CD8-positive, alpha-beta T cell (primary cell): ENCODE measurements at regions of chr2 and their contacts with region 1.

Region 1: DNA sequence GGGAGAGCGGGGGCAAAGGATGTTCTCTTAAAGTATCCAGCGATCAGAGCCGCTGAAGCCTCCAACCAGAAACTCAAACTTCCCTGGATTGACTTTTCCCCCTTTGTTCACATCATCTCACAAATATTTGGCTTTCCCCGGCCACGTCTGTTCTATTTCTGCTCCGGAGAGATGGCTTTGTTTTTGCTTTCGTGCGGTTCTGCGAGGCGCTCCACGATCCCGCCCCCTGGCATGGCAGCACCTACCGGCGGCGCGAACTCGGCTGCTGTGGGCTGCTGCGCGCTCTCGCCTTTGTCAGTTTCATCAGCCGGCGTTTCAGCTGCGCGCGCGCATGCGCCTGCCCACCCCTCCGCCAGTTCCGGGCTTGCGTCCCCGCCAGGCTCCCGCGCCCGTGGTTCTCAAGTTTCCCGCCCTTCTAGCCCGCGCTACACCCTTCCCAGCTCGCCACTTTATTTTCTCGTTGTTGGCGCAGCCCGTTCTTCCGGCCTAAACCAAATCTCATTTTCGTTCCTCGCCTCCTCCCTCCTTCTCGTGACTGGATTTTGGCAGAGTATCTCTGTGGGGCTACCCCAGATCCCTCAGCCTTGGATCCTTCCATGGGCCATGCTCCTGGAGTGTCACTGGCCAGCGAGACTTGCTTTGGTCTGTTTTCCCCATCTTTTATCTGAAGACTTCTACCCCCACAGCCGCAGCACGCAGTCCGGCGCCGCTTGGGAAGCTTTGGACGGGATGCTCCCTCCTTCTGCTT is 98.0 kb downstream of the INSIG2 start:
- DNase-seq: peak; percentile 66 to 94 (median 88)
- ATAC-seq: peak; percentile 92
- H3K4me3 ChIP-seq: peak overlapping the region; percentile 81 to 93
- H3K4me3 Mint-ChIP-seq: peak overlapping the region; percentile 94
- H3K27ac ChIP-seq: peak overlapping the region; percentile 73 to 79
- H3K27ac Mint-ChIP-seq: peak overlapping the region; percentile 94
- H3K4me1 ChIP-seq: peaks cover 9% of the 10 kb centered on the region
- H3K4me1 Mint-ChIP-seq: peaks cover 17% of the 10 kb centered on the region
- H3K27me3 ChIP-seq: no peaks in the 10 kb centered on the region
- H3K27me3 Mint-ChIP-seq: no peaks in the 10 kb centered on the region
- CTCF ChIP-seq: no peak

Region 2: DNA sequence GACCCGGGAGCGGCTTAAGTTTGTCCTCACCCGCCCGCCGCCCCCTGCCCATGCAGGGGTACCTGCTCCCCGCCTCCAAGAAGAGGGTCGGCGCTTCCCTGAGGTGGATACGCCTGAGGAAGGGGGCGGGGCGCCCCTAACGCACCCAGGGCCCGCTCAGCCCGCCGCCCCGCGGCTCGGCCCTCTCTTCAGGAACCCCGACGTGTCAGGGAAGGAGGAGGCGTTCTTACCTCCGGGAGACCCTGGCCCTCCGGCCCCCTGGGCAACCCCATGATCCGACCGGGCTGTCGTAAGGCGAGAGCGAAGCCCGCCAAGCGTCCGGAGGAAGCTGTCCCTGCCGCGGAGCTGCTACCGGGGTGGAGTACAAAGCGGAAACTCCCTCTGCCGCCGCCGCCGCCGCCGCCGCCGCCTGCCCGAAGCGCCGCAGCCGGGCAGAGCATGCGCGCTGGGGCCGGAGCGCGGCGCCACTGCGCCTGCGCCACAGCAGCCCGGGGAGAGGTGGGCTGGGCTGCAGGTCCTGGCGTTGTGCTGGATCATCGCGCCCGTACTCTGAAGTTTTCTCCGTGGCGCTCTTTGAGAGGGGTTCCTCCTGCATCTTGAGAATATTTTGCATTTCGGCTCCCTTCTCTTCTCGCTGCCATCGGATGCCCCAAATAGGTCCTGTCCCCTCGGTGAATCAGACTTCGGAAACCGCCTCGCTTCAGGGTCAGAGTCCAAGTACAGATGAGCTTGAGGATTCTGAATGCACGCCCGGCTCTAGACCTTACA is 172.4 kb before region 1 on chr2 and contains the start of gene CCDC93:
- CTCF ChIA-PET with region 1: no interaction called
- POLR2A ChIA-PET with region 1: interaction called, 5 read pairs
- intact Hi-C with region 1: loop called (anchors 1 to 5 kb)
- DNase-seq: peak; percentile 73 to 94 (median 86)
- ATAC-seq: peak; percentile 85
- H3K4me3 ChIP-seq: peak within 1 kb of the TSS; percentile 73 to 88
- H3K4me3 Mint-ChIP-seq: peak within 1 kb of the TSS; percentile 95
- H3K27ac ChIP-seq: peak within 1 kb of the TSS; percentile 93 to 95
- H3K27ac Mint-ChIP-seq: peak within 1 kb of the TSS; percentile 92
- H3K4me1 ChIP-seq: peaks cover 27% of the 10 kb centered on the region
- H3K4me1 Mint-ChIP-seq: peaks cover 47% of the 10 kb centered on the region
- H3K27me3 ChIP-seq: no peaks in the 10 kb centered on the region
- H3K27me3 Mint-ChIP-seq: peaks cover 3% of the 10 kb centered on the region
- CTCF ChIP-seq: no peak
- total RNA-seq, gene CCDC93: 84.4 to 85.3 TPM

Region 3: GRCh38 chr2:118088051-118089024 is 97.9 kb before region 1 on chr2 and contains the start of gene INSIG2:
- CTCF ChIA-PET with region 1: interaction called, 3 read pairs
- POLR2A ChIA-PET with region 1: interaction called, 14 read pairs
- intact Hi-C with region 1: loop called (anchors 1 to 5 kb)
- DNase-seq: peak; percentile 79 to 95 (median 86)
- ATAC-seq: peak; percentile 88
- H3K4me3 ChIP-seq: peak within 1 kb of the TSS; percentile 70 to 98
- H3K4me3 Mint-ChIP-seq: peak within 1 kb of the TSS; percentile 92
- H3K27ac ChIP-seq: peak within 1 kb of the TSS; percentile 80
- H3K27ac Mint-ChIP-seq: peak within 1 kb of the TSS; percentile 95
- H3K4me1 ChIP-seq: peaks cover 16% of the 10 kb centered on the region
- H3K4me1 Mint-ChIP-seq: peaks cover 34% of the 10 kb centered on the region
- H3K27me3 ChIP-seq: no peaks in the 10 kb centered on the region
- H3K27me3 Mint-ChIP-seq: peaks cover 4% of the 10 kb centered on the region
- CTCF ChIP-seq: no peak
- total RNA-seq, gene INSIG2: 10.9 to 11.8 TPM

Region 4: DNA sequence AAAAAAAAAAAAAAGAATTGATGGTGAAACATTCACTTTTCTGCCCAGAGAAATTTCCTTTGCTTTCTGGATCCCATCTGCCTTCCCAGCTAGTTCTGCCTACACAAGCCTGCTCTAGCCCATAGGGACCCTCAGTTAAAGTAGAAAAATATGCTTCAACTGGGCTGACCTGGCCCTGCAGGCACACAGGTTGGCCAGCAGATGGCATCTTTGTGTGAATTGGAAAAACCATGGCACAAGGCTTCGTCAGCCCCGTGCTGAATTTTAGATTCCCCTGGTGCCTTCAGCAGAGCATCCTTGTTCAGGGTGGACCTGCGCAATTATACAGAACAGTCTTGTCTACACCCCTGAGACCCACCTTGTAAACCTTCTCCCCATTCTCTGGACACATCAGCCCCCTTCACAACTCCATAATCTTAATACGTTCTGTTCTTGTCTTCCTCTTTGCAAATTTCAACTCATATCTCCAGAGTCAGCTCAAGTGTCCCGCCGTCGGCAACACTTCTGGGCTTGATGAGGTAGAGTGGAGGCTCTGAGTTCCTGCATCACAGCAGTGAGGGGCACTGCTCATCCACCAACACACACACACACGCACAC is 16.5 kb after region 1 on chr2:
- CTCF ChIA-PET with region 1: interaction called, 18 read pairs
- POLR2A ChIA-PET with region 1: interaction called, 5 read pairs
- intact Hi-C with region 1: no loop called
- DNase-seq: peak in 8 of 9 experiments; percentile 24 to 71 (median 54)
- ATAC-seq: peak; percentile 92
- H3K4me3 ChIP-seq: no peak overlapping the region
- H3K4me3 Mint-ChIP-seq: peak overlapping the region; percentile 0
- H3K27ac ChIP-seq: no peak overlapping the region
- H3K27ac Mint-ChIP-seq: no peak overlapping the region
- H3K4me1 ChIP-seq: no peaks in the 10 kb centered on the region
- H3K4me1 Mint-ChIP-seq: peaks cover 5% of the 10 kb centered on the region
- H3K27me3 ChIP-seq: no peaks in the 10 kb centered on the region
- H3K27me3 Mint-ChIP-seq: peaks cover 26% of the 10 kb centered on the region
- CTCF ChIP-seq: peak; percentile 77

Region 5: DNA sequence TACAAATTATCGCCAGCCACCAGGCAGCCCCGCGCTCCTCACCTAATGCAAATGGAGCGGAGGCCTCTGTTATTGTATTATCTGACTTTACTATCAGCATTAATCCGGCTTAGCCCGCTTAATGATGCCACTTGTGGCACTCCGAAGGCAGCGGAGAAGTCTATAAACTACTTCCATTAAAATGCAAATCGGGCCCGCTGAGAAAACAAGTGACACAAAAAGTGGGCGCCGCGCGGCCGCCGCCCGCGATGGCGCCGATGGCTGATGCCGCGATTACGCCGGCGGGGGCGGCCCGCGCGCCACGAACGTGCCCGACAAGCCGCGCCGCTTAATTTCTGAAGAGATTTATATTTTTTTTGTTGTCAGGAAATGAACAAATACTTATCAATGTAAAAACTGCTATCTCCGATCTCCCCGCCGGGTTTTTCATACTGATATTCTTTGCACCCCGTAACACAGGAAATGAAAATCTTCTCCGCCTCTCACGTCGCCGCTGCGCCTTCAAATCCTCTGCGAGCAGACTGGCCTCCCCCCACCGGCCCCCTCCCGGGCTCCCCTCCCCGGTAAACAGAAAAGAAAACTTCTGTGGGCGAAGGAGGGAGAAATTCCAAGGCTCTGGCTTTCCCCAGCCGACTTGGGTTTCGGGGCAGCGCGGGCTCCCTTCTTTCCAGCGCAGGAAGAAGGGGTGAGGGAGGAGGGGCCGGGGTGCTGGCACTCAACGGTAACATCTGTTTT is 123.8 kb after region 1 on chr2:
- CTCF ChIA-PET with region 1: no interaction called
- POLR2A ChIA-PET with region 1: no interaction called
- intact Hi-C with region 1: loop called (anchors 1 to 5 kb)
- DNase-seq: peak; percentile 22 to 77 (median 56)
- ATAC-seq: peak; percentile 75
- H3K4me3 ChIP-seq: peak overlapping the region; percentile 66 to 69
- H3K4me3 Mint-ChIP-seq: peak overlapping the region; percentile 88
- H3K27ac ChIP-seq: peak overlapping the region; percentile 81 to 88
- H3K27ac Mint-ChIP-seq: peak overlapping the region; percentile 97
- H3K4me1 ChIP-seq: peaks cover 8% of the 10 kb centered on the region
- H3K4me1 Mint-ChIP-seq: peaks cover 5% of the 10 kb centered on the region
- H3K27me3 ChIP-seq: no peaks in the 10 kb centered on the region
- H3K27me3 Mint-ChIP-seq: peaks cover 4% of the 10 kb centered on the region
- CTCF ChIP-seq: no peak